B cell (primary cell): ENCODE measurements at regions of chr19 and their contacts with region 1.

Region 1: GRCh38 chr19:37506387-37507166 is at the start of gene ZNF793:
- DNase-seq: peak; percentile 92
- ATAC-seq: peak; percentile 85
- H3K4me3 ChIP-seq: peak within 1 kb of the TSS; percentile 63 to 99 (median 83)
- H3K4me3 Mint-ChIP-seq: no peak within 1 kb of the TSS
- H3K27ac ChIP-seq: peak within 1 kb of the TSS; percentile 91 to 92
- H3K27ac Mint-ChIP-seq: no peak within 1 kb of the TSS
- H3K4me1 ChIP-seq: peaks cover 14 to 16% of the 10 kb centered on the region in 2 donors
- H3K4me1 Mint-ChIP-seq: peaks cover 2% of the 10 kb centered on the region
- H3K27me3 ChIP-seq: no peaks in the 10 kb centered on the region
- H3K27me3 Mint-ChIP-seq: no peaks in the 10 kb centered on the region
- CTCF ChIP-seq: no peak
- total RNA-seq, gene ZNF793: 12.2 and 12.7 TPM in 2 replicates

Region 2: DNA sequence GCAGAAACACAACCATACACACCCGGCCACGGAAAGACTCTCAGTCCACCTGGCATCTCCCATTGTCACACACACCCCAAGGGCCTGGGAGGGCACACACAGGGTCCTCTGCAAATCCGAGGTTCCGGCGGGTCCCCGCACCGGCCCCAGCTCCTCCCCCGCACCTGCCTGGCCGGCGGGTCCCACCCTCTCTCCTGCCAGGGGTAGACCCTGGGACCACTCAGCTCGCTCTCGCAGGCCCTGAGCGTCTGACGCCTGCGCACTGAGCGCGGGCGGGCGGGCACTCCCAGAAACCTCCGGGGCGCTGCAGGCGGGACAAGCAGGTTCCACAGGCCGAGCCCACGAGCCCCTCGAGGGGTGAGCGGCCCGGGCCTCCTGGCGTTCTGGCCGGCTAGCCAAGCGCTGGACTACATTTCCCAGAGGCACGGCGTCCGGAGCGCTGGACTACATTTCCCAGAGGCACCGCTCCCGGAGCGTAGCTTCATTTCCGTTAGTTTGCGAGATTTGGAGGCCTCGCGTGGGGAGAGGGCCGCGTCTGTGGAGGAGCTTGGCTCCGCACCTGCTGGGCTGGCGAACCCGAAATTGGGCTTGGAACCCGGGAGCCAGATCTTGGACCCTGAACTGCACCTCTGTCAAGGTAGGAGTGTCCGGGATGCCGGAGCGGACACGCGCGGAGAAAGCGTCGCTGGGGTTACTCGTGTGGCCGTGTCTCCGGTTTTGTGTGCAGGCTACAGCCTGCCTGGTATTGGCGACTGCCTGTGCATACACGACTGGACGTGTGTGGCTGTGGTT is 428.4 kb before region 1 on chr19 and contains the start of gene ZNF420:
- CTCF ChIA-PET with region 1: no interaction called
- POLR2A ChIA-PET with region 1: no interaction called
- intact Hi-C with region 1: loop called (anchors 1 kb)
- DNase-seq: peak; percentile 96
- ATAC-seq: peak; percentile 95
- H3K4me3 ChIP-seq: peak within 1 kb of the TSS; percentile 76 to 93 (median 85)
- H3K4me3 Mint-ChIP-seq: peak within 1 kb of the TSS; percentile 93
- H3K27ac ChIP-seq: peak within 1 kb of the TSS; percentile 71 to 89
- H3K27ac Mint-ChIP-seq: peak within 1 kb of the TSS; percentile 96
- H3K4me1 ChIP-seq: peaks cover 14 to 20% of the 10 kb centered on the region in 2 donors
- H3K4me1 Mint-ChIP-seq: peaks cover 29% of the 10 kb centered on the region
- H3K27me3 ChIP-seq: no peaks in the 10 kb centered on the region
- H3K27me3 Mint-ChIP-seq: no peaks in the 10 kb centered on the region
- CTCF ChIP-seq: no peak
- total RNA-seq, gene ZNF420: 17.4 and 24.9 TPM in 2 replicates

Region 3: GRCh38 chr19:37309834-37310575 is 196.6 kb before region 1 on chr19:
- CTCF ChIA-PET with region 1: no interaction called
- POLR2A ChIA-PET with region 1: no interaction called
- intact Hi-C with region 1: loop called (anchors 10 kb)
- DNase-seq: peak; percentile 57
- ATAC-seq: no peak
- H3K4me3 ChIP-seq: no peak overlapping the region
- H3K4me3 Mint-ChIP-seq: no peak overlapping the region
- H3K27ac ChIP-seq: no peak overlapping the region
- H3K27ac Mint-ChIP-seq: no peak overlapping the region
- H3K4me1 ChIP-seq: peaks cover 5 to 11% of the 10 kb centered on the region in 2 donors
- H3K4me1 Mint-ChIP-seq: peaks cover 19% of the 10 kb centered on the region
- H3K27me3 ChIP-seq: peaks cover 0 to 3% (median 1%) of the 10 kb centered on the region in 4 experiments
- H3K27me3 Mint-ChIP-seq: peaks cover 5% of the 10 kb centered on the region
- CTCF ChIP-seq: peak; percentile 64

Region 4: DNA sequence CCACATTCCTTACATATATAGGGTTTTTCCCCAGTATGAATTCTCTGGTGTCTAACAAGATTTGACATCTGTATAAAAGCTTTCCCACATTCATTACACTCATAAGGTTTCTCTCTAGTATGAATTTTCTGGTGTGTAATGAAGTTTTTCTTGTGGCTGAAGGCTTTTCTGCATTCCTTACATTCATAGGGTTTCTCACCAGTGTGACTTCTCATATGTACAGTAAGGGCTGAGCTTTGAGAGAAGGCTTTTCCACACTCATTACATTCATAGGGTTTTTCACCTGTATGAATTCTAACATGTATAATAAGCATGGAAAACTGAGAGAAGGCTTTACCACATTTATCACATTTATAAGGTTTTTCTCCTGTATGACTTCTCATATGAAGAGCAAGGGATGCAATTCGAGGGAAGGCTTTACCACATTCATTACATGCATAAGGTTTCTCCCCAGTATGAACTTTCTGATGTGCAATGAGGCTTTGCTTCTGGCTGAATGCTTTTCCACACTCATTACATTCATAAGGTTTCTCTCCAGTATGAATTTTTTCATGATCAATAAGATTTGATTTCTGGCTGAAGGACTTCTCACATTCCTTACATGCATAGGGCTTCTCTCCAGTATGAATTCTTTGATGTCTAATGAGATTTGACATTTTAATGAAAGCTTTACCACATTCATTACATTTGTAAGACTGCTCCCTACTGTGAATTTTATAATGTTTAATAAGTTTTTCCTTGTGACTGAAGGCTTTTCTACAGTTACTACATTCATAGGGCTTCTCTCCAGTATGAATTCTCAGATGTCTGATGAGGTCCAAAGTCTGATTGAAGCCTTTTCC is 93.1 kb before region 1 on chr19:
- CTCF ChIA-PET with region 1: no interaction called
- POLR2A ChIA-PET with region 1: no interaction called
- intact Hi-C with region 1: no loop called
- DNase-seq: no peak
- ATAC-seq: no peak
- H3K4me3 ChIP-seq: peak overlapping the region in 1 of 5 experiments; percentile 1
- H3K4me3 Mint-ChIP-seq: no peak overlapping the region
- H3K27ac ChIP-seq: no peak overlapping the region
- H3K27ac Mint-ChIP-seq: no peak overlapping the region
- H3K4me1 ChIP-seq: no peaks in the 10 kb centered on the region
- H3K4me1 Mint-ChIP-seq: no peaks in the 10 kb centered on the region
- H3K27me3 ChIP-seq: no peaks in the 10 kb centered on the region
- H3K27me3 Mint-ChIP-seq: no peaks in the 10 kb centered on the region
- CTCF ChIP-seq: no peak

Region 5: DNA sequence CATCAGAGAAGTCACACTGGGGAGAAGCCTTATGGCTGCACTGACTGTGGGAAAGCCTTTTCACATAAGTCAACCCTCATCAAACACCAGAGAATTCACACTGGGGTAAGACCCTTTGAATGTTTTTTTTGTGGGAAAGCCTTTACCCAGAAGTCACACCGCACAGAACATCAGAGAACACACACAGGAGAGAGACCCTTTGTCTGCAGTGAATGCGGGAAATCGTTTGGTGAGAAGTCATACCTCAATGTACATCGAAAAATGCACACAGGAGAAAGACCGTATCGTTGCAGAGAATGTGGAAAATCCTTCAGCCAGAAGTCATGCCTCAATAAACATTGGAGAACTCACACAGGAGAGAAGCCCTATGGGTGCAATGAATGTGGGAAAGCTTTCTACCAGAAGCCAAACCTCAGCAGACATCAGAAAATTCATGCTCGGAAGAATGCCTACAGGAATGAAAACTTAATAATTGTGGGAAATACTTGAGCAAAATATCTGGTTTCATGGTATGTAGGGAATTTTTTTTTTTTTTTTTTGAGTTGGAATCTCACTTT is 30.9 kb after region 1 on chr19:
- CTCF ChIA-PET with region 1: no interaction called
- POLR2A ChIA-PET with region 1: no interaction called
- intact Hi-C with region 1: no loop called
- DNase-seq: no peak
- ATAC-seq: no peak
- H3K4me3 ChIP-seq: no peak overlapping the region
- H3K4me3 Mint-ChIP-seq: no peak overlapping the region
- H3K27ac ChIP-seq: no peak overlapping the region
- H3K27ac Mint-ChIP-seq: no peak overlapping the region
- H3K4me1 ChIP-seq: no peaks in the 10 kb centered on the region
- H3K4me1 Mint-ChIP-seq: no peaks in the 10 kb centered on the region
- H3K27me3 ChIP-seq: no peaks in the 10 kb centered on the region
- H3K27me3 Mint-ChIP-seq: no peaks in the 10 kb centered on the region
- CTCF ChIP-seq: no peak

Region 6: DNA sequence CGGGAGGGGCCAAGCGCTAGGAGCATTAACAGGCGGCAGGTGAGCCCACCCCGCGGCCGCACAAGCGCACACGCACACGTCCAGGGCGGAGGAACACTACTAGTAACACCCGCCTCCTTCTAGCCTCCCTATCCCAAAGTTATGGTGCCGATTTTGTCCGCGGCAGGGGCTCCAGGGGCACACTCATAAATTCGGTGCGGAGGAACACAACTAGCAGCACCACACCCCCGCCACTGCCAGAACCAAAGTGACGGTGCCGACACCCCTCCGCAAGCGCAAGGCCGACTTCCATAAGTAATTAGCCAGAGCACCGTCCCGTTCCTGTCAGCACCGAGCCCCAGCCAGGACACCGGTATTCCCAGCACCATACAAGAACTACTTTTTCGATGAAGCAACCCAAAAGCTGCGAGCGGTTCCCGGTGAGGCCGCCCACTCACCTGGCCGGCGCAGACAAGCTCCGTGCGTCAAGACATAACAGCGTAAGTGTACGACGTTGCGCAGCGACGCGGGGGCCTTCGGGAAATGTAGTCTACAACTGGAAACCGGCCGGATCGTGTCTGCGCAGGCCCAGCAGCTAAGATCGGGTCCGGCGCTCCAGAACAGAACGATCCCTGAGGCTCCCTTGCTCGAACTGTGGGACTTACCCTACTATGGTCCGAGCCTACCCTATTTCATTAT is 87.9 kb after region 1 on chr19 and contains the starts of genes ZNF540 and ZNF571:
- CTCF ChIA-PET with region 1: no interaction called
- POLR2A ChIA-PET with region 1: interaction called, 8 read pairs
- intact Hi-C with region 1: loop called (anchors 1 kb)
- DNase-seq: peak; percentile 95
- ATAC-seq: peak; percentile 96
- H3K4me3 ChIP-seq: peak within 1 kb of the TSS; percentile 67 to 88 (median 87)
- H3K4me3 Mint-ChIP-seq: peak within 1 kb of the TSS; percentile 99
- H3K27ac ChIP-seq: peak within 1 kb of the TSS; percentile 93 to 96
- H3K27ac Mint-ChIP-seq: peak within 1 kb of the TSS; percentile 99
- H3K4me1 ChIP-seq: peaks cover 11 to 14% of the 10 kb centered on the region in 2 donors
- H3K4me1 Mint-ChIP-seq: peaks cover 25% of the 10 kb centered on the region
- H3K27me3 ChIP-seq: no peaks in the 10 kb centered on the region
- H3K27me3 Mint-ChIP-seq: no peaks in the 10 kb centered on the region
- CTCF ChIP-seq: no peak
- total RNA-seq, gene ZNF540: 10.7 and 10.8 TPM in 2 replicates
- total RNA-seq, gene ZNF571: 10.0 and 13.1 TPM in 2 replicates

Region 7: GRCh38 chr19:37779127-37780005 is 272.8 kb after region 1 on chr19 and contains the start of gene ZNF573:
- CTCF ChIA-PET with region 1: no interaction called
- POLR2A ChIA-PET with region 1: no interaction called
- intact Hi-C with region 1: loop called (anchors 1 kb)
- DNase-seq: peak; percentile 91
- ATAC-seq: peak; percentile 84
- H3K4me3 ChIP-seq: peak within 1 kb of the TSS; percentile 71 to 81 (median 74)
- H3K4me3 Mint-ChIP-seq: peak within 1 kb of the TSS; percentile 96
- H3K27ac ChIP-seq: peak within 1 kb of the TSS; percentile 86 to 93
- H3K27ac Mint-ChIP-seq: peak within 1 kb of the TSS; percentile 97
- H3K4me1 ChIP-seq: peaks cover 7 to 11% of the 10 kb centered on the region in 2 donors
- H3K4me1 Mint-ChIP-seq: peaks cover 39% of the 10 kb centered on the region
- H3K27me3 ChIP-seq: no peaks in the 10 kb centered on the region
- H3K27me3 Mint-ChIP-seq: no peaks in the 10 kb centered on the region
- CTCF ChIP-seq: peak; percentile 18
- total RNA-seq, gene ZNF573: 28.8 and 31.1 TPM in 2 replicates